GM12878 (cell line): ENCODE measurements at regions of chr11 and their contacts with region 1.

Region 1: GRCh38 chr11:100930185-100930778 is 199.3 kb downstream of the PGR start:
- DNase-seq: no peak
- ATAC-seq: peak; percentile 55
- H3K4me3 ChIP-seq: no peak overlapping the region
- H3K27ac ChIP-seq: no peak overlapping the region
- H3K4me1 ChIP-seq: peaks cover 14% of the 10 kb centered on the region
- H3K27me3 ChIP-seq: no peaks in the 10 kb centered on the region
- CTCF ChIP-seq: peak; percentile 39 to 59 (median 55); a peak in 5 of 6 replicates
- EP300 ChIP-seq: no peak
- POLR2A ChIP-seq: no peak
- RAD21 ChIP-seq: peak; percentile 75

Region 2: GRCh38 chr11:100575870-100576705 is 354.2 kb before region 1 on chr11:
- CTCF ChIA-PET with region 1: interaction called, 42 read pairs
- POLR2A ChIA-PET with region 1: no interaction called
- RAD21 ChIA-PET with region 1: interaction called, 18 read pairs
- SMC1A ChIA-PET with region 1: interaction called, 34 read pairs
- in situ Hi-C with region 1: loop called (anchors 5 kb)
- intact Hi-C with region 1: loop called (anchors 1 kb)
- DNase-seq: peak; percentile 9
- ATAC-seq: peak; percentile 95
- H3K4me3 ChIP-seq: no peak overlapping the region
- H3K27ac ChIP-seq: no peak overlapping the region
- H3K4me1 ChIP-seq: no peaks in the 10 kb centered on the region
- H3K27me3 ChIP-seq: no peaks in the 10 kb centered on the region
- CTCF ChIP-seq: peak; percentile 59 to 76 (median 71)
- EP300 ChIP-seq: no peak
- POLR2A ChIP-seq: no peak
- RAD21 ChIP-seq: peak; percentile 97

Region 3: DNA sequence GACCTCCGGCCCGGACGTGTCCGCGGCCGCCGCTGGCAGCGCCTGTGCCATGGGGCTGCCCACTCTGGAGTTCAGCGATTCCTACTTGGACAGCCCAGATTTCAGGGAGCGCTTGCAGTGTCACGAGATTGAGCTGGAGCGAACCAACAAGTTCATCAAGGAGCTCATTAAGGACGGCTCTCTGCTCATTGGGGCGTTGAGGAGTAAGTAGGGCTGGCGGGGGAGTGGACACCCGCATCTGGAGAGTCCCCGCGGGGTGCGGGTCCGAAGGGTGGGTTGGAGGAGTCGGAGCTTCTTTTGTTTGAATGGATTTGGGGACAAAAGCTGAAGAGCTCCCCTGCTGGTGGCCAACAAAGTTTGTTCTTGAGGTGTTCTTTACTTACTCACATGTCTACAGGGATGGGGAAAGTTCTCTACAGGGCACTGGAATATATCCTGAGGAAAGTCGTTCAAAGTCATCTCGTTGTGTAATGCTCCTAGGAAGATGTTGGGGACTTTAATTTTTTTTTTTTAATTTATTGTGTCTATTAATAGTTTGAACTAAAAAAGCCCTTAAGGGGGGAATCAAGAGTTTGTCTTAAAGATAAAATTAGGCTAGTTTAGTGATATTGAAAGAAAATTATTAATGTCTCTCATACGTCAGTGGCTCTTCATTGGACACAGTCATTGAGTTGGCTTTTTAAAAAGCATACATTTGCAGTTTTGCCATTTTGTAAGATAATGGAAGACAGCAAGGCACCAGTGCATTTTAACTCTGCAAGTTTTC is 242.5 kb before region 1 on chr11:
- CTCF ChIA-PET with region 1: interaction called, 30 read pairs
- POLR2A ChIA-PET with region 1: no interaction called
- RAD21 ChIA-PET with region 1: interaction called, 3 read pairs
- SMC1A ChIA-PET with region 1: interaction called, 15 read pairs
- in situ Hi-C with region 1: loop called (anchors 10 kb)
- intact Hi-C with region 1: loop called (anchors 2 kb)
- DNase-seq: no peak
- ATAC-seq: peak; percentile 73
- H3K4me3 ChIP-seq: peak overlapping the region; percentile 96
- H3K27ac ChIP-seq: peak overlapping the region; percentile 74
- H3K4me1 ChIP-seq: peaks cover 28% of the 10 kb centered on the region
- H3K27me3 ChIP-seq: no peaks in the 10 kb centered on the region
- CTCF ChIP-seq: peak; percentile 65 to 72 (median 70); a peak in 5 of 6 replicates
- EP300 ChIP-seq: no peak
- POLR2A ChIP-seq: no peak
- RAD21 ChIP-seq: peak; percentile 42

Region 4: GRCh38 chr11:100855466-100856067 is 74.7 kb before region 1 on chr11:
- CTCF ChIA-PET with region 1: interaction called, 7 read pairs
- POLR2A ChIA-PET with region 1: no interaction called
- RAD21 ChIA-PET with region 1: no interaction called
- SMC1A ChIA-PET with region 1: interaction called, 3 read pairs
- in situ Hi-C with region 1: loop called (anchors 5 kb)
- intact Hi-C with region 1: loop called (anchors 2 kb)
- DNase-seq: no peak
- ATAC-seq: peak; percentile 60
- H3K4me3 ChIP-seq: no peak overlapping the region
- H3K27ac ChIP-seq: no peak overlapping the region
- H3K4me1 ChIP-seq: no peaks in the 10 kb centered on the region
- H3K27me3 ChIP-seq: no peaks in the 10 kb centered on the region
- CTCF ChIP-seq: peak; percentile 35 to 64 (median 37); a peak in 4 of 6 replicates
- EP300 ChIP-seq: no peak
- POLR2A ChIP-seq: no peak
- RAD21 ChIP-seq: peak; percentile 77

Region 5: DNA sequence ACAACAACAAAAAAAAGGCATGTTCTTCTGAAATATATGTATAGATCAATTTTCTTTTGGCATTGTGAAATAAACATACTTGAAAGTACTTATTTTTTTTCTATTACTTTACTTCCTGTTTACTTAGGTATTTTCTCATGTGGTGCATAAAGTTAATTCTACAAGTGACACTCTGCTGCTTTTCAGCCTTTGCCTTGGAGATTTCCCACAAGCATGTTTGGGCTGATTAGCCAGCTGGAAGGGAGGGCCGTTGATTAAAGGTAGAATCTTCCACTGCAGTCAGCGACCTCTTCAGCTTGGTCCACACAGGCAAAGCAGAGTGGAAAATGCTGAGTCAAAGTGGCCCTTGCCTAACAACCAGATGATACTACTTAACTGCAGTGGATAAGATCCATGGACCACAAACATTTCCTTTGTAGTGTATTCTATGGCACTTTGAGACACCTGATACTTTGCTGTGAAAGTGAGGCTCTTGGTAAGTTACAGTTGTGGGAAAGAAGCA is 67.2 kb before region 1 on chr11:
- CTCF ChIA-PET with region 1: interaction called, 4 read pairs
- POLR2A ChIA-PET with region 1: no interaction called
- RAD21 ChIA-PET with region 1: no interaction called
- SMC1A ChIA-PET with region 1: interaction called, 3 read pairs
- in situ Hi-C with region 1: no loop called
- intact Hi-C with region 1: loop called (anchors 2 kb)
- DNase-seq: peak; percentile 49
- ATAC-seq: peak; percentile 85
- H3K4me3 ChIP-seq: no peak overlapping the region
- H3K27ac ChIP-seq: no peak overlapping the region
- H3K4me1 ChIP-seq: peaks cover 7% of the 10 kb centered on the region
- H3K27me3 ChIP-seq: no peaks in the 10 kb centered on the region; a peak in 1 of 4 replicates
- CTCF ChIP-seq: no peak
- EP300 ChIP-seq: no peak
- POLR2A ChIP-seq: no peak
- RAD21 ChIP-seq: no peak

Region 6: GRCh38 chr11:100902454-100903141 is 27.7 kb before region 1 on chr11:
- CTCF ChIA-PET with region 1: no interaction called
- POLR2A ChIA-PET with region 1: no interaction called
- RAD21 ChIA-PET with region 1: no interaction called
- SMC1A ChIA-PET with region 1: no interaction called
- in situ Hi-C with region 1: no loop called
- intact Hi-C with region 1: no loop called
- DNase-seq: no peak
- ATAC-seq: no peak
- H3K4me3 ChIP-seq: no peak overlapping the region
- H3K27ac ChIP-seq: no peak overlapping the region
- H3K4me1 ChIP-seq: no peaks in the 10 kb centered on the region
- H3K27me3 ChIP-seq: no peaks in the 10 kb centered on the region
- CTCF ChIP-seq: no peak
- EP300 ChIP-seq: no peak
- POLR2A ChIP-seq: no peak
- RAD21 ChIP-seq: no peak

Region 7: GRCh38 chr11:100978442-100978841 is 48.2 kb after region 1 on chr11:
- CTCF ChIA-PET with region 1: no interaction called
- POLR2A ChIA-PET with region 1: no interaction called
- RAD21 ChIA-PET with region 1: no interaction called
- SMC1A ChIA-PET with region 1: no interaction called
- in situ Hi-C with region 1: no loop called
- intact Hi-C with region 1: no loop called
- DNase-seq: no peak
- ATAC-seq: no peak
- H3K4me3 ChIP-seq: no peak overlapping the region
- H3K27ac ChIP-seq: no peak overlapping the region
- H3K4me1 ChIP-seq: no peaks in the 10 kb centered on the region
- H3K27me3 ChIP-seq: no peaks in the 10 kb centered on the region
- CTCF ChIP-seq: no peak
- EP300 ChIP-seq: no peak
- POLR2A ChIP-seq: no peak
- RAD21 ChIP-seq: no peak

Region 8: GRCh38 chr11:100991541-100991940 is 61.3 kb after region 1 on chr11:
- CTCF ChIA-PET with region 1: no interaction called
- POLR2A ChIA-PET with region 1: no interaction called
- RAD21 ChIA-PET with region 1: no interaction called
- SMC1A ChIA-PET with region 1: no interaction called
- in situ Hi-C with region 1: no loop called
- intact Hi-C with region 1: no loop called
- DNase-seq: no peak
- ATAC-seq: no peak
- H3K4me3 ChIP-seq: no peak overlapping the region
- H3K27ac ChIP-seq: no peak overlapping the region
- H3K4me1 ChIP-seq: no peaks in the 10 kb centered on the region
- H3K27me3 ChIP-seq: no peaks in the 10 kb centered on the region
- CTCF ChIP-seq: no peak
- EP300 ChIP-seq: no peak
- POLR2A ChIP-seq: no peak
- RAD21 ChIP-seq: no peak

Region 9: DNA sequence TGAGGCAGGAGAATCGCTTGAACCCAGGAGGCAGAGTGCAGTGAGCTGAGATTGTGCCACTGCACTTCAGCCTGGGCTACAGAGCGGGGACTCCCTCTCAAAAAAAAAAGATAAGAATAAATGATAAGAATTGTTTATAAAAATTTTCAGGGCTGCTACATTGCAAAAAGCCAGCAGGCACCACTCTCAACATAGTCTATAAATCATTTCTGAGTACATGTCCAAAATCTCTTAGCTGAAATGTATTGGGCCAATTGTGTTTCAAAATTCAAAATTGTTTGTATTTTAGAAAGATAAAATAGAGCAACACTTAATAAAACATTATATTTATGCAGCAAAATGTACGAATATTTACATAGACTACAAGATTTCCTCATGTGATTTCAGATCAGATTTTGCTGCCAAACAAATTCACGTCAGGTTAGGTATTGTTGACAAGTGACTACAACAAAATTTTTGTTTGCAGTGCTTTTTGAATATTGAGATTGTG is 185.4 kb after region 1 on chr11:
- CTCF ChIA-PET with region 1: no interaction called
- POLR2A ChIA-PET with region 1: no interaction called
- RAD21 ChIA-PET with region 1: no interaction called
- SMC1A ChIA-PET with region 1: no interaction called
- in situ Hi-C with region 1: no loop called
- intact Hi-C with region 1: no loop called
- DNase-seq: no peak
- ATAC-seq: no peak
- H3K4me3 ChIP-seq: no peak overlapping the region
- H3K27ac ChIP-seq: no peak overlapping the region
- H3K4me1 ChIP-seq: no peaks in the 10 kb centered on the region
- H3K27me3 ChIP-seq: no peaks in the 10 kb centered on the region
- CTCF ChIP-seq: no peak
- EP300 ChIP-seq: no peak
- POLR2A ChIP-seq: no peak
- RAD21 ChIP-seq: no peak